ENCODE measurements at regions of chr1 and their contacts with region 1.

Region 1: GRCh38 chr1:157496121-157496526 is 56.2 kb downstream of the FCRL5 start:
- DNase-seq: no peak
- ATAC-seq: peak; percentile 83
- H3K4me3 ChIP-seq: no peak overlapping the region
- H3K27ac ChIP-seq: no peak overlapping the region
- H3K4me1 ChIP-seq: peaks cover 4% of the 10 kb centered on the region; the same call in 1 of the 2 replicates
- H3K27me3 ChIP-seq: 0 out of 4 replicates have a peak, but pooled peaks cover 0 to 2% of the 10 kb centered on the region in 2 experiments
- CTCF ChIP-seq: peak; percentile 67 to 85 (median 81)
- EP300 ChIP-seq: no peak
- POLR2A ChIP-seq: no peak
- RAD21 ChIP-seq: peak; percentile 63

Region 2: GRCh38 chr1:157193702-157194391 is 302.3 kb before region 1 on chr1:
- CTCF ChIA-PET with region 1: interaction called, 24 read pairs
- POLR2A ChIA-PET with region 1: no interaction called
- RAD21 ChIA-PET with region 1: interaction called, 4 read pairs
- SMC1A ChIA-PET with region 1: interaction called, 23 read pairs
- in situ Hi-C with region 1: loop called (anchors 5 kb)
- intact Hi-C with region 1: no loop called
- DNase-seq: no peak
- ATAC-seq: peak; percentile 60
- H3K4me3 ChIP-seq: no peak overlapping the region
- H3K27ac ChIP-seq: no peak overlapping the region
- H3K4me1 ChIP-seq: peaks cover 8% of the 10 kb centered on the region; the same call in 1 of the 2 replicates
- H3K27me3 ChIP-seq: no peaks in the 10 kb centered on the region
- CTCF ChIP-seq: peak; percentile 68 to 76 (median 75)
- EP300 ChIP-seq: no peak
- POLR2A ChIP-seq: no peak
- RAD21 ChIP-seq: peak; percentile 65

Region 3: GRCh38 chr1:157312082-157312812 is 183.9 kb before region 1 on chr1:
- CTCF ChIA-PET with region 1: interaction called, 13 read pairs
- POLR2A ChIA-PET with region 1: no interaction called
- RAD21 ChIA-PET with region 1: no interaction called
- SMC1A ChIA-PET with region 1: interaction called, 4 read pairs
- in situ Hi-C with region 1: no loop called
- intact Hi-C with region 1: no loop called
- DNase-seq: no peak
- ATAC-seq: no peak
- H3K4me3 ChIP-seq: no peak overlapping the region
- H3K27ac ChIP-seq: no peak overlapping the region
- H3K4me1 ChIP-seq: peaks cover 12% of the 10 kb centered on the region
- H3K27me3 ChIP-seq: no peaks in the 10 kb centered on the region; a peak in 2 of 4 replicates
- CTCF ChIP-seq: no peak
- EP300 ChIP-seq: no peak
- POLR2A ChIP-seq: no peak
- RAD21 ChIP-seq: no peak

Region 4: DNA sequence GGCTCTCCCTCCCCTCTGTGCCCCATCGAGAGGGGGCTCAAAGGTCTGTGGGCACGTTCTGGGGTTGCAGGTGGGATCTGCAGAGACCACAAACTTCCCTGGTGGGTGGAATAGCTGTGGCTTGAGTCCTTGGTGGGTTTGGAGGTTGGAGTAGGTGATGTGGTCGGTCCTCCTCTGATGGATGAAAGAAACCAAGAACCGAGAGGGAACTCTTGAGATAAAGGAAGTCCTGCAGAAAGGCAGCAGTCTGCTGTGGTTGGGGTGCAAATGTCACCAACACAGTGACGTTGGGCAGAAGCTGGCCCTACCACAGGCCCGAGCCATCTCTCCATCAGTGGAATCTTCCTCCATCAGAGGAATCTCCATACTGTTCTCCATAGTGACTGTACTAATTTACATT is 115.6 kb before region 1 on chr1:
- CTCF ChIA-PET with region 1: interaction called, 146 read pairs
- POLR2A ChIA-PET with region 1: interaction called, 6 read pairs
- RAD21 ChIA-PET with region 1: interaction called, 36 read pairs
- SMC1A ChIA-PET with region 1: interaction called, 39 read pairs
- in situ Hi-C with region 1: no loop called
- intact Hi-C with region 1: no loop called
- DNase-seq: no peak
- ATAC-seq: peak; percentile 45
- H3K4me3 ChIP-seq: no peak overlapping the region
- H3K27ac ChIP-seq: no peak overlapping the region
- H3K4me1 ChIP-seq: no peaks in the 10 kb centered on the region
- H3K27me3 ChIP-seq: no peaks in the 10 kb centered on the region; a peak in 1 of 4 replicates
- CTCF ChIP-seq: no peak
- EP300 ChIP-seq: no peak
- POLR2A ChIP-seq: no peak
- RAD21 ChIP-seq: no peak

Region 5: GRCh38 chr1:157469752-157470675 is 26.1 kb before region 1 on chr1:
- CTCF ChIA-PET with region 1: no interaction called
- POLR2A ChIA-PET with region 1: no interaction called
- RAD21 ChIA-PET with region 1: no interaction called
- SMC1A ChIA-PET with region 1: no interaction called
- in situ Hi-C with region 1: no loop called
- intact Hi-C with region 1: no loop called
- DNase-seq: no peak
- ATAC-seq: no peak
- H3K4me3 ChIP-seq: no peak overlapping the region
- H3K27ac ChIP-seq: no peak overlapping the region
- H3K4me1 ChIP-seq: no peaks in the 10 kb centered on the region
- H3K27me3 ChIP-seq: no peaks in the 10 kb centered on the region; a peak in 2 of 4 replicates
- CTCF ChIP-seq: no peak
- EP300 ChIP-seq: no peak
- POLR2A ChIP-seq: no peak
- RAD21 ChIP-seq: no peak

Region 6: DNA sequence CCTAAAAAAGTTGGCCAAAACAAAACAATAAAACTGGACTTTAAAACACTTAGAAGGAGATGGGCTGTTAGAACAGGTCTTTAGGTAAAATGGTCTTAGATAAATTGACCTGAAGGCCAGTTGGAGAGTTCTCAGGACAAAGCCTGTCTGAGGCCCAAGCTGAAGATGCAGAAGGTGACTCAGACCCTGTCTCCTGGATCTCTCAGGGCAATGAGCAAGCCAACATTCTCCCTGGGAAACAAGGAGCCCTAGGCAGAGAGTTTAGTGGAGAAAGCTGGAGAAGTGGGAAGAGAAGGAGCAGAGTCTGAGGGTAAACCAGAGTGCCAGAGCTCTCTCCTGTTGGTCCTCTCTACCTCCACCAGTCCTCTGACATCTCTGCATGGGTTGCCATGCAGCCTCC is 13.9 kb before region 1 on chr1:
- CTCF ChIA-PET with region 1: interaction called, 23 read pairs
- POLR2A ChIA-PET with region 1: no interaction called
- RAD21 ChIA-PET with region 1: interaction called, 4 read pairs
- SMC1A ChIA-PET with region 1: interaction called, 9 read pairs
- in situ Hi-C with region 1: no loop called
- intact Hi-C with region 1: no loop called
- DNase-seq: no peak
- ATAC-seq: no peak
- H3K4me3 ChIP-seq: no peak overlapping the region
- H3K27ac ChIP-seq: no peak overlapping the region
- H3K4me1 ChIP-seq: no peaks in the 10 kb centered on the region
- H3K27me3 ChIP-seq: 0 out of 4 replicates have a peak, but pooled peaks cover 0 to 3% of the 10 kb centered on the region in 2 experiments
- CTCF ChIP-seq: no peak
- EP300 ChIP-seq: no peak
- POLR2A ChIP-seq: no peak
- RAD21 ChIP-seq: no peak

Region 7: DNA sequence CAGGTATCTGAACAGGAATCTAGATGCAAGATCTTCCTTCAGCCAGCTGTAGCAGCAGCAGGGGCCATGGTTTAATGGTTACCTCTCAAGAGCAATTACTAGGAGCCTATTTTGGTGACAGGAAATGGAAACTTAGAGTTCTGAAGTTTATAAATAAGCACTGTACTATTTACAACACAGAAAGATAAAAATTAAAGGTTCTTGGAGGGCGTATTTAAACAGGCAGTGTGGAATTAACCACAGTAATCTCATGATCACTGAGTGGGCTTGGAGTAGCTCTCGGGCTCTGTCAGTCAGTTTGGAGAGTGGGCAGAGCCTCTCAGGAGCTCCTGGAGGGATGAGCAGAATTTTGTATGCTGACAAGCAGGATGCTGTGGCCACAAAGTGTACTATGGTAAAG is 66.4 kb after region 1 on chr1:
- CTCF ChIA-PET with region 1: interaction called, 4 read pairs
- POLR2A ChIA-PET with region 1: no interaction called
- RAD21 ChIA-PET with region 1: interaction called, 5 read pairs
- SMC1A ChIA-PET with region 1: interaction called, 18 read pairs
- in situ Hi-C with region 1: no loop called
- intact Hi-C with region 1: no loop called
- DNase-seq: peak; percentile 63
- ATAC-seq: peak; percentile 83
- H3K4me3 ChIP-seq: peak overlapping the region; percentile 40; the same call in 1 of the 2 replicates
- H3K27ac ChIP-seq: 0 out of 2 replicates have a peak overlapping the region, but pooled peaks have one; percentile 1
- H3K4me1 ChIP-seq: peaks cover 23% of the 10 kb centered on the region
- H3K27me3 ChIP-seq: no peaks in the 10 kb centered on the region
- CTCF ChIP-seq: no peak
- EP300 ChIP-seq: peak; percentile 47 to 83; a peak in 1 of 4 replicates
- POLR2A ChIP-seq: no peak
- RAD21 ChIP-seq: no peak